Right ventricle myocardium inferior (tissue), 1 donor: ENCODE measurements at regions of chr17 and their contacts with region 1.

Region 1: GRCh38 chr17:45135192-45135977 is at the start of gene ACBD4:
- DNase-seq: peak; percentile 98
- ATAC-seq: peak; percentile 79
- total RNA-seq, gene ACBD4: 6.7 TPM

Region 2: DNA sequence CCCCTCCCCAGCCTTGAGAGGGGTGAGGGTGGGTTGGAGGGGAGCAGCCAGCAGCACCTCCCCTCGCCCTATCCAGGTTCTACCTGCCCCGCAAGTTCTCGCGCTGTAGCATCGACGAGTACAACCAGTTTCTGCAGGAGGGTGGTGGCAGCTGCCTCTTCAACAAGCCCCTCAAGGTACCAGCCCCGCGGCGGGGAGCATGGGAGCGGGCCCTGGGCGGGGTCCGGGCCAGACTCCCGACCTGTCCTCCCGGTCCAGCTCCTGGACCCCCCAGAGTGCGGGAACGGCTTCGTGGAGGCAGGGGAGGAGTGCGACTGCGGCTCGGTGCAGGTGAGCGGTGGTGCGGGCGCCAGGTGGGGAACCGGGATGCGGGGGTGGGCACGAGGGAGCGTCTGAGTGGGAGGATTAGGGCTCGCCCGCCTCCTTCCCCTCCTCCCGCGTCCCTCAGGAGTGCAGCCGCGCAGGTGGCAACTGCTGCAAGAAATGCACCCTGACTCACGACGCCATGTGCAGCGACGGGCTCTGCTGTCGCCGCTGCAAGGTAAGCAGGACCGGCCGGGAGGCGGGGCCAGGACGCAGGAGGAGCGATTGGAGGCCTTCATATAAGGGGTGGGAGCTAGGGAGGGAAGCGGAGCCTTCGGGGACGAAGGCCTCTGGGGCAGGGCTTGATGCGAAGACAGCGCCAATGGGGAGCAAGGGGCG is 360.1 kb before region 1 on chr17:
- intact Hi-C with region 1: loop called (anchors 5 kb)
- DNase-seq: peak; percentile 98
- ATAC-seq: peak; percentile 96

Region 3: DNA sequence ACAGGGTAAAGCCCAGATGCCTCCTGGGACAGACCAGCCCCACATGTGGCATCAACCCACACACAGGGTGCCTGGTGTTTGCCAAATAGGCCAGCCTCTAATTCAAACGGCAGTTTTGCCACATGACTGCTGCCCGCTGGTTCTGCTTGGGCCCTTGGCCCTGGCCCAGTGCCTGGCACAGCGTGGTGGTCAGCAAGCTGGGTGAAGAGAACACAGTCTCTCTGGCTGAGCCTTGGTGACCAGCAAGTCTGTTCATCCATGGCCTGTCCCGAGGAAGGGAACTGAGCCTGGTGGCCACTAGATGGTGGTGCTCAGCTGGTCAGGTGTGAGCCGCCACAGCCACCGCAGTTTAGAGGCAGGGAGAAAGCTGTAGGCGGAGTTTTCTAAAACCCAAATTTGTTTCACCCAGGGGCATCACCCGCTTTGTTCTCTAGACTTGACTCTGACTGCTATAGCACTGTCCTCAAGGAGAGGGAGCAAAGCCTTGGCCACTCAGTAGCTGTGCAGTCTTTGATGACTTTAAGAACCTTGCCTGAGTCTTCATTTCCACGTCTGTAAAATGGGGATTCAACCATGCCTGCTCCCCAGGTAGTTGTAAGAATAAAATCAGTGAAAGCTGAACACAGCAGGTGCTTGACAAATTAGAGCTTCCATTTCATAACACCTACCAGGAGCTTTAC is 215.4 kb before region 1 on chr17:
- intact Hi-C with region 1: loop called (anchors 2 kb)
- DNase-seq: peak; percentile 87
- ATAC-seq: peak; percentile 82

Region 4: GRCh38 chr17:45060797-45061605 is 74.4 kb before region 1 on chr17 and contains the start of gene NMT1:
- intact Hi-C with region 1: loop called (anchors 5 kb)
- DNase-seq: peak; percentile 97
- ATAC-seq: peak; percentile 97
- total RNA-seq, gene NMT1: 96.0 TPM

Region 5: GRCh38 chr17:45098869-45099616 is 36.3 kb before region 1 on chr17:
- intact Hi-C with region 1: loop called (anchors 2 kb)
- DNase-seq: peak; percentile 93
- ATAC-seq: peak; percentile 80

Region 6: GRCh38 chr17:45197555-45198334 is 62.4 kb after region 1 on chr17:
- intact Hi-C with region 1: loop called (anchors 1 kb)
- DNase-seq: peak; percentile 96
- ATAC-seq: peak; percentile 92